Spleen (tissue), 13 donors: ENCODE measurements at regions of chr15 and their contacts with region 1.

Region 1: GRCh38 chr15:38894243-38894948 is 329.8 kb upstream of the RASGRP1 start:
- DNase-seq: no peak
- H3K4me3 ChIP-seq: no peak overlapping the region
- H3K27ac ChIP-seq: peak overlapping the region in 3 of 8 donors; percentile 3 to 22 (median 15)
- H3K4me1 ChIP-seq: peaks cover 0 to 11% (median 0%) of the 10 kb centered on the region in 6 donors
- H3K27me3 ChIP-seq: no peaks in the 10 kb centered on the region
- CTCF ChIP-seq: no peak
- POLR2A ChIP-seq: no peak

Region 2: DNA sequence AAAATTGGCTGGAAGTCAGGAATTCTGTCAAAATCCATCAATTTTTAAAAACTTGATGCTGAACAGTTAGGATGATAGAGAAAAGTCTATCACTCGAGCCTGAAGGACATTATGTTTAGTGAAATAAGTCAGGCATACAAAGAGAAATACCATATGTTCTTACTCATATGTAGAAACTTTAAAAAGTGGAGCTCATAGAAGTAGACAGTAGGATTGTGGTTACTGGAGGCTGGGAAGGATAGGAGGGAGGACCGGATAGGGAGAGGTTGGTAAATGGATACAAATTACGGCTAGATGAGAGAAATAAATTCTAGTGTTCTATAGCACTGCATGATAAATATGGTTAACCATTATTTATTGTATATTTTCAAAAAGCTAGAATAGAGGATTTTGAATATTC is 59.7 kb after region 1 on chr15:
- intact Hi-C with region 1: loop called (anchors 10 kb)
- DNase-seq: no peak
- H3K4me3 ChIP-seq: no peak overlapping the region
- H3K27ac ChIP-seq: no peak overlapping the region
- H3K4me1 ChIP-seq: no peaks in the 10 kb centered on the region
- H3K27me3 ChIP-seq: no peaks in the 10 kb centered on the region
- CTCF ChIP-seq: no peak
- POLR2A ChIP-seq: no peak